ENCODE measurements at regions of chr3 and their contacts with region 1.

Region 1: GRCh38 chr3:197599089-197599765 is 43.5 kb upstream of the BDH1 start:
- DNase-seq: peak; percentile 80
- H3K4me3 ChIP-seq: no peak overlapping the region
- H3K27ac ChIP-seq: no peak overlapping the region
- H3K4me1 ChIP-seq: no peaks in the 10 kb centered on the region
- H3K27me3 ChIP-seq: peaks cover 3 to 4% of the 10 kb centered on the region in 2 experiments
- CTCF ChIP-seq: peak; percentile 73 to 94
- POLR2A ChIP-seq: no peak

Region 2: GRCh38 chr3:197567904-197568681 is 31.1 kb before region 1 on chr3:
- CTCF ChIA-PET with region 1: interaction called, 17 read pairs
- POLR2A ChIA-PET with region 1: no interaction called
- dilution Hi-C with region 1: no loop called
- intact Hi-C with region 1: no loop called
- DNase-seq: no peak
- H3K4me3 ChIP-seq: no peak overlapping the region
- H3K27ac ChIP-seq: no peak overlapping the region
- H3K4me1 ChIP-seq: no peaks in the 10 kb centered on the region
- H3K27me3 ChIP-seq: peaks cover 5 to 13% of the 10 kb centered on the region in 2 experiments
- CTCF ChIP-seq: no peak
- POLR2A ChIP-seq: no peak

Region 3: GRCh38 chr3:197577366-197578074 is 21.7 kb before region 1 on chr3:
- CTCF ChIA-PET with region 1: interaction called, 21 read pairs
- POLR2A ChIA-PET with region 1: no interaction called
- dilution Hi-C with region 1: no loop called
- intact Hi-C with region 1: no loop called
- DNase-seq: no peak
- H3K4me3 ChIP-seq: no peak overlapping the region
- H3K27ac ChIP-seq: no peak overlapping the region
- H3K4me1 ChIP-seq: no peaks in the 10 kb centered on the region
- H3K27me3 ChIP-seq: peaks cover 14 to 17% of the 10 kb centered on the region in 2 experiments
- CTCF ChIP-seq: no peak
- POLR2A ChIP-seq: no peak

Region 4: GRCh38 chr3:197583371-197583770 is 15.9 kb before region 1 on chr3:
- CTCF ChIA-PET with region 1: interaction called, 70 read pairs
- POLR2A ChIA-PET with region 1: no interaction called
- dilution Hi-C with region 1: no loop called
- intact Hi-C with region 1: no loop called
- DNase-seq: no peak
- H3K4me3 ChIP-seq: no peak overlapping the region
- H3K27ac ChIP-seq: no peak overlapping the region
- H3K4me1 ChIP-seq: no peaks in the 10 kb centered on the region
- H3K27me3 ChIP-seq: peaks cover 0 to under 1% of the 10 kb centered on the region in 2 experiments
- CTCF ChIP-seq: no peak
- POLR2A ChIP-seq: no peak

Region 5: DNA sequence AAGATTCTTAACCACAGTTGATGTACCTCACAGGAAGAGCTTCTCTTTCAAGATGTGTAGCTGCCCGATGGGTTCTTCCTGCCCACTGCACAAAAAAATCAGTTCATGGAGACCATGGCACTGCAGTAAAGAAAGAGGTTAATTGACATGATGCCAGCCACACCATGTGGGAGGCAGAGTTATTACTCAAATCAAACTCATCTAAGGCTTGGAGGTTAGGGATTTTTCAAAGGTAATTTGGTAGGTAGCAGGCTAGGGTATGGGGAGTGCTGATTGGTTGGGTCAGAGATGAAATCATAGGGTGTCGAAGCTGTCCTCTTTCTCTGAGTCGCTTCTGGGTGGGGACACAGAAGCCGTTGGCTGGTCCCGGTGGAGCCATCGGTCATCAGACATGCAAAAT is 14.0 kb after region 1 on chr3:
- CTCF ChIA-PET with region 1: interaction called, 41 read pairs
- POLR2A ChIA-PET with region 1: no interaction called
- dilution Hi-C with region 1: no loop called
- intact Hi-C with region 1: no loop called
- DNase-seq: no peak
- H3K4me3 ChIP-seq: no peak overlapping the region
- H3K27ac ChIP-seq: no peak overlapping the region
- H3K4me1 ChIP-seq: no peaks in the 10 kb centered on the region
- H3K27me3 ChIP-seq: no peaks in the 10 kb centered on the region
- CTCF ChIP-seq: no peak
- POLR2A ChIP-seq: no peak

Measured in endothelial cell of umbilical vein (primary cell).